Activated naive CD8-positive, alpha-beta T cell treated with anti-CD3 and anti-CD28 coated beads, Interleukin-2, amount 10 ng/mL, durations not matched to agents 7 days and 5 days (primary cell): ENCODE measurements at regions of chr6 and their contacts with region 1.

Region 1: GRCh38 chr6:107786709-107787588 is 37.2 kb downstream of the SCML4 start:
- DNase-seq: no peak
- ATAC-seq: peak; percentile 82
- H3K4me3 Mint-ChIP-seq: peak overlapping the region; percentile 75
- H3K27ac Mint-ChIP-seq: peak overlapping the region; percentile 87
- H3K4me1 Mint-ChIP-seq: peaks cover 51% of the 10 kb centered on the region
- H3K27me3 Mint-ChIP-seq: no peaks in the 10 kb centered on the region

Region 2: GRCh38 chr6:107740496-107741190 is 46.3 kb before region 1 on chr6:
- POLR2A ChIA-PET with region 1: interaction called, 27 read pairs
- DNase-seq: no peak
- ATAC-seq: peak; percentile 50
- H3K4me3 Mint-ChIP-seq: peak overlapping the region; percentile 80
- H3K27ac Mint-ChIP-seq: peak overlapping the region; percentile 92
- H3K4me1 Mint-ChIP-seq: peaks cover 52% of the 10 kb centered on the region
- H3K27me3 Mint-ChIP-seq: no peaks in the 10 kb centered on the region

Region 3: DNA sequence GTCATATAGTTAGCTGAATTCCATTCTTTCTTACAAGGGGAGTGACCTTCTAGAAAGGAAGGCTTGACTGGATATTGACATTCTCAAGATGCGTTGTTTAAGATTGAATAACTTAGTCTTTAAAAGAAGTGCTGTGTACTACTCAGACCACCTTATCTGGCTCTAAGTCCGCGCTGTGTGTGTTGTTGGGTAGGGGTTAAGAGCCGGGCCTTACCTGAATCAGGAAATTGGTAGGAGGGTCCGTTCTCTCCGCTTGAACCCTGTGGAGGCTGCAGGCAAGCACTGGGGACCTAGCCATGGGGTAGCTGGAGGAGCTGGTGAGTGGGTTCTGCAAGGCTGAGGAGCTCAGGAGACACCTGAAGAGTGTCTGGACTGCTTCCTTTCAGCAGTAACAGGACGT is 46.2 kb after region 1 on chr6:
- POLR2A ChIA-PET with region 1: no interaction called
- DNase-seq: no peak
- ATAC-seq: no peak
- H3K4me3 Mint-ChIP-seq: peak overlapping the region; percentile 50
- H3K27ac Mint-ChIP-seq: no peak overlapping the region
- H3K4me1 Mint-ChIP-seq: peaks cover 16% of the 10 kb centered on the region
- H3K27me3 Mint-ChIP-seq: no peaks in the 10 kb centered on the region

Region 4: DNA sequence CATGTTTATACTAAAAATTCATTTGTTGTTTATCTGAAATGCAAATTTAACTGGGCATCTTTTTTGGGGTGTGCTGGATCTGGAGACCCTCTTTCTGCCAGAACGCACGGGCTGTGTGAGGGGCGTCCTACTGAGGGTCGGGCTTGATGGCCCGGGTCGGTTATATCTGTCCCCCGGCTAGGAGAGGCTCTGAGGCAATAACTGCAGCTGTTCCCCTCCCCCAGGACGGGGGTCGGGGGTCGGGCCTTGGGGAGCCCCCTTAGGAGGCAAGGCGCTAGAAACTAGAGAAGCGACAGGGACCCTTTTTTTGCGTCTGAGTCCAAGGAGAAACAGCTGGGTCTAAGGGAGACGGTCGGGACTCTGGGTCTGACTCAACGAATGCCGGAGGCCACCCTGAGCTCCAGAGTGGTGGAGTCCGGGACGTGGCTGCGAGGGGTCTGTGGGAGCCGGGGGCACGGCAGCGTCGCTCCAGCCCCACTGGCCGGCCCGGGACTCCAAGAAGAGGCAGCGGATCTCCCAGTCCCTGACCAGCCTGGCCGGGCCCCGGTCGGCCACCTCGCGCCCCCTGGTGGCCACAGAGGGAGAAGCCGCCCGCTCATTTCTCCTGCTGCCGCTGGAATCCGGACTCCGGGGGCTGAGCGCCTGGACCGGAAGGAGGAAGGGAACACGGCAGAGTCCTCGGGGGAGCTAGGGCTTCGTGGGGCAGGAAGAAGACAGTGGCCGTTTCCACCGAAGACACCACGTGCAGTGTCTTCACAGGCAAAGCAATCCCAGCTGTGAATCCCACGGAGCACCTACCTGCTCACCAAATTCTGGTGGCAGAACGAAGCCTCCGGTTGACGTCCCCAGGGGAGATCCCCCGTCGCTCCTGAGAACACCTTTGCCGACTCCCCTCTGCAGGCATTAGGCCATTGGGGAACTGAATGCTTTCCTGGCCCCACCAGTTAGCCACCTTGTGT is 61.2 kb after region 1 on chr6:
- POLR2A ChIA-PET with region 1: interaction called, 14 read pairs
- DNase-seq: peak; percentile 92
- ATAC-seq: peak; percentile 84
- H3K4me3 Mint-ChIP-seq: peak overlapping the region; percentile 82
- H3K27ac Mint-ChIP-seq: peak overlapping the region; percentile 77
- H3K4me1 Mint-ChIP-seq: peaks cover 21% of the 10 kb centered on the region
- H3K27me3 Mint-ChIP-seq: no peaks in the 10 kb centered on the region

Region 5: DNA sequence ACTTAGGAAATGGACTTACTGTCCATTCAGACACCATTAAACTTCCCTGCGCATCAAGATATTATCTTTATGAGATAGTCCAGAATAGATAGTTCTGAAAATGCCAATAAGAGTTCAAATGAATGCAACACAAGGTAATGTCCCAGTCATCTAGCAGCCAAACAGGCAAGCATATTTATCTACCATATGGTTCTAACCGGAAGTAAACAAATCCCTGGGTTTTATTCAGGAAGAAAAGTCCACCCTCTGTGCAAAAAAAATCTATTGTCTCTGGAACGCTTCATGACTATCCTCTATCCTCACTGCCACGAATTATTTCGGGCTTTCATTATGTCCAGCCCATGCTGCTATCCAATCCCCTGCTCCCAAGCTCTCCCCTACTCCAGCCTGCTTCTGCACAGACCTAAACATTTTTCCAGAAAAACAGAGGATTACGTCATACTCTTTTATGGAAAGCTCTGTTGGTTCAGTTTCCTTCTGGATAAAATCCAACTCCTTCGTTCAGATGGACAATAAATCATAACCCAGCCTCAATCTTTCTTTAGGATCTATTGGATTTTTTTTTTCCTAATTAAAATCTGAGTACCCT is 1642.0 kb after region 1 on chr6:
- POLR2A ChIA-PET with region 1: no interaction called
- DNase-seq: no peak
- ATAC-seq: no peak
- H3K4me3 Mint-ChIP-seq: no peak overlapping the region
- H3K27ac Mint-ChIP-seq: no peak overlapping the region
- H3K4me1 Mint-ChIP-seq: peaks cover 3% of the 10 kb centered on the region
- H3K27me3 Mint-ChIP-seq: peaks cover 2% of the 10 kb centered on the region